ENCODE measurements at regions of chr17 and their contacts with region 1.

Region 1: GRCh38 chr17:79400989-79401703 is 209.7 kb downstream of the RBFOX3 start:
- DNase-seq: no peak
- ATAC-seq: peak; percentile 81
- H3K4me3 ChIP-seq: peak overlapping the region; percentile 22 to 36
- H3K27ac ChIP-seq: no peak overlapping the region
- H3K4me1 ChIP-seq: peaks cover 8% of the 10 kb centered on the region; the same call in 1 of the 2 replicates
- H3K27me3 ChIP-seq: peaks cover 10% of the 10 kb centered on the region
- CTCF ChIP-seq: peak; percentile 99

Region 2: GRCh38 chr17:79589669-79590522 is 188.8 kb after region 1 on chr17:
- CTCF ChIA-PET with region 1: interaction called, 12 read pairs
- POLR2A ChIA-PET with region 1: no interaction called
- in situ Hi-C with region 1: no loop called
- intact Hi-C with region 1: no loop called
- DNase-seq: no peak
- ATAC-seq: no peak
- H3K4me3 ChIP-seq: no peak overlapping the region
- H3K27ac ChIP-seq: no peak overlapping the region
- H3K4me1 ChIP-seq: no peaks in the 10 kb centered on the region
- H3K27me3 ChIP-seq: peaks cover 20% of the 10 kb centered on the region
- CTCF ChIP-seq: no peak

Region 3: GRCh38 chr17:79612468-79613194 is 211.5 kb after region 1 on chr17:
- CTCF ChIA-PET with region 1: interaction called, 3 read pairs
- POLR2A ChIA-PET with region 1: no interaction called
- in situ Hi-C with region 1: no loop called
- intact Hi-C with region 1: loop called (anchors 10 kb)
- DNase-seq: no peak
- ATAC-seq: peak; percentile 84
- H3K4me3 ChIP-seq: no peak overlapping the region
- H3K27ac ChIP-seq: no peak overlapping the region
- H3K4me1 ChIP-seq: peaks cover 3% of the 10 kb centered on the region; the same call in 1 of the 2 replicates
- H3K27me3 ChIP-seq: peaks cover 33% of the 10 kb centered on the region
- CTCF ChIP-seq: peak; percentile 98

Region 4: GRCh38 chr17:79651761-79652160 is 250.6 kb after region 1 on chr17:
- CTCF ChIA-PET with region 1: no interaction called
- POLR2A ChIA-PET with region 1: interaction called, 10 read pairs
- in situ Hi-C with region 1: no loop called
- intact Hi-C with region 1: no loop called
- DNase-seq: no peak
- ATAC-seq: no peak
- H3K4me3 ChIP-seq: no peak overlapping the region
- H3K27ac ChIP-seq: no peak overlapping the region
- H3K4me1 ChIP-seq: no peaks in the 10 kb centered on the region
- H3K27me3 ChIP-seq: peaks cover 24% of the 10 kb centered on the region
- CTCF ChIP-seq: no peak

Region 5: GRCh38 chr17:79691931-79692330 is 290.8 kb after region 1 on chr17:
- CTCF ChIA-PET with region 1: interaction called, 10 read pairs
- POLR2A ChIA-PET with region 1: no interaction called
- in situ Hi-C with region 1: no loop called
- intact Hi-C with region 1: no loop called
- DNase-seq: no peak
- ATAC-seq: no peak
- H3K4me3 ChIP-seq: no peak overlapping the region
- H3K27ac ChIP-seq: no peak overlapping the region
- H3K4me1 ChIP-seq: peaks cover 5% of the 10 kb centered on the region; the same call in 1 of the 2 replicates
- H3K27me3 ChIP-seq: peaks cover 4% of the 10 kb centered on the region
- CTCF ChIP-seq: no peak

Region 6: GRCh38 chr17:80219763-80220725 is 818.9 kb after region 1 on chr17 and contains the starts of genes SGSH and SLC26A11:
- CTCF ChIA-PET with region 1: interaction called, 12 read pairs
- POLR2A ChIA-PET with region 1: no interaction called
- in situ Hi-C with region 1: no loop called
- intact Hi-C with region 1: no loop called
- DNase-seq: no peak
- ATAC-seq: peak; percentile 92
- H3K4me3 ChIP-seq: peak within 1 kb of the TSS; percentile 74 to 97
- H3K27ac ChIP-seq: peak within 1 kb of the TSS; percentile 93
- H3K4me1 ChIP-seq: peaks cover 14% of the 10 kb centered on the region
- H3K27me3 ChIP-seq: no peaks in the 10 kb centered on the region
- CTCF ChIP-seq: no peak
- total RNA-seq, gene SGSH: 70.2 TPM
- total RNA-seq, gene SLC26A11: 30.9 TPM